ENCODE measurements at regions of chr6 and their contacts with region 1.

Region 1: GRCh38 chr6:16503970-16504415 is 257.3 kb downstream of the ATXN1 start:
- DNase-seq: no peak
- H3K4me3 ChIP-seq: no peak overlapping the region
- H3K27ac ChIP-seq: no peak overlapping the region
- H3K27me3 ChIP-seq: no peaks in the 10 kb centered on the region
- CTCF ChIP-seq: no peak

Region 2: DNA sequence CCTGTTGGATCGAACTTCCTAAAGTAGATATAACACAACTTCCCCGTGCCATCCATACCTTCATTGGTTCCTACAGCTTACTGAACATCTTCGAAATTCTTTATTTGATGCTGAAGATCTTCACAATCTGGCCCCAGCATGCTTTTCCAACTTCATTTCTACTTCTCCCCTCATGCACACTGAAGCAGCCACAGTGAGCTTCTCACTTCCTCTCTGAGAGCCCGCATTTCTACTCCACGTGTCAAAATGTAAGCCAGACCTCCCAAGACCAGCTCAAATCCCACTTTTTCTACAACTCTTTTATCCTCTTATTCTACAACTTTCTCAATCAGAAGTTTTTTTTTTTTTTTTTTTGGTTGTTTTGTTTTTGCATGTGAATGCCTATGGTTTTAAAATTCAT is 10.9 kb before region 1 on chr6:
- CTCF ChIA-PET with region 1: no interaction called
- POLR2A ChIA-PET with region 1: no interaction called
- DNase-seq: no peak
- H3K4me3 ChIP-seq: no peak overlapping the region
- H3K27ac ChIP-seq: no peak overlapping the region
- H3K27me3 ChIP-seq: no peaks in the 10 kb centered on the region
- CTCF ChIP-seq: no peak

Region 3: DNA sequence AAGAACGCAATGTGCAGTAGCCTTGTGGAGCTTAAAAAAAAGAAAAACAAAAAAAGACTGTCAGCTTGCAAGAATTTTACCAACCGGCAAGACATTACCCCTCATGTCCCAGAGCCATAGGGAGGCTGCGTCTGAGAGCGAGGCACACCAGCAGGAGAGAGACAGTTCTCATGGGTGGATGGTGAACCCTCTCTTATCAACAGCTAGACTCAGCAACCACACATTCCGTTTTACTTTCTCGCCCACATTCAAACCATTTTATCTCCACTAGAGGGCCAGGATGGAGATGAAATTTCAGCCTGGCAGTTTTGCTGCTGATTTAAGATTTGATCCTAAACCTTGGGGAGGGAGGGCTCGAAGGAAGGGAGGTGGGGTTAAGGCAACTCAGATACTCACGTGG is 10.3 kb after region 1 on chr6:
- CTCF ChIA-PET with region 1: interaction called, 13 read pairs
- POLR2A ChIA-PET with region 1: no interaction called
- DNase-seq: peak; percentile 32
- H3K4me3 ChIP-seq: no peak overlapping the region
- H3K27ac ChIP-seq: no peak overlapping the region
- H3K27me3 ChIP-seq: no peaks in the 10 kb centered on the region
- CTCF ChIP-seq: peak; percentile 67

Measured in AG04450 (cell line).